ENCODE measurements at regions of chr13 and their contacts with region 1.

Region 1: DNA sequence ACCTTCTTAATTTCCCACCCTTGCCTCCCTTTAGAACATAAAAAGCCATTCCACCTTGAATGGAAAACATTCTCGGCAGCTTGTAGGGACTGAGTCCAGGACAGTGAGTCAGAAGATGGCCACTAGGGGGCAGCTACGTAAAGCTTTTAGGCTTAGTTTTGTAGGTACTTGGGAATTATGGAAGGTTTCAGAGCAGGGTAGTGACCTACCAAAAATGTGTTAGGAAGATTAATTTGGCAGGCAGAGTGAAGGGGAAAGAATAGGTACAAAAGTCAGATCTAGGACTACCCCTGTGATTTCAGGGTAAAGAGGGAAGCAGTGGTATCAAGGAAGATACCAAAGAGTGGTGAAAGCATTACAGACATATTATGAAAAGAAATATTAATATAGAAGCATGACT is 198.4 kb downstream of the NDFIP2 start:
- DNase-seq: no peak
- H3K4me3 Mint-ChIP-seq: no peak overlapping the region
- H3K27ac Mint-ChIP-seq: no peak overlapping the region
- H3K4me1 Mint-ChIP-seq: no peaks in the 10 kb centered on the region
- H3K27me3 Mint-ChIP-seq: peaks cover 4% of the 10 kb centered on the region

Region 2: DNA sequence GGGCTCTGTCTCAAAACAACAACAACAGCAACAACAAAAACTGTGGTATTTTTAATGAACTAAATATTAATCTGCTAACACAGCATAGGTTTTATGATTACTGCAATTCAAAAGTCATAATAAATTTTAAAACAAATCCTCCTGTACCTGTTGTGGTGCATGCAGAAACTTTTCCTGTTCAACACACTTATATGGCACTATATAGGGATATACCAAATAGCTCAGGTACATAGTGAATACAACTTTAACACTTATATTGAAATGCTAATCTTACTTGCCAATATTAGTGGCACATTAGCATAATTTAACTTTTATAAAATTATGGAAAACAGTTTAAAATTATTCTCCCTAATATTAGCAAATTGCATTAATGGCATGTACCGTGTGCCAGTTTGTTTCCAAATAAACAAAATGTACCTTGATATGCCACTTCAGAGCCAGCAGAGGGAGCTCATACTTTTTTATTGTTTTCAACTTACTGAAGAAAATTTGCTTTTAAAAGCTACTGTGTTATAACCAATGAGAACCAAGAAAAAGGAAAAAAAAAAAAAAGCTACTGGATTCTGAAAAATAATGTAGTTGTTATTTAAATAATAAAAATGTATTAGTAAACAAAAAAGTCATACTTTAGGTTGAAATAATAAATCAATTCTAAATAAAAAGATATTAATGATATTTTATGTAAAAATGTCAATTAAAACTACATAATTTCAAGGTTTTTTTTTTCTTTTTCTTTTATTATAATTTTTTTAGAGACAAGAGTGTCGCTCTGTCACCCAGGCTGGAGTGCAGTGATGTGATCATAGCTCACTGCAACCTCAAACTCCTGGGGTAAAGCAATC is 255.3 kb before region 1 on chr13:
- intact Hi-C with region 1: loop called (anchors 5 kb)
- DNase-seq: no peak
- H3K4me3 Mint-ChIP-seq: no peak overlapping the region
- H3K27ac Mint-ChIP-seq: no peak overlapping the region
- H3K4me1 Mint-ChIP-seq: peaks cover 35% of the 10 kb centered on the region
- H3K27me3 Mint-ChIP-seq: no peaks in the 10 kb centered on the region

Region 3: GRCh38 chr13:79692846-79693245 is 13.5 kb after region 1 on chr13:
- intact Hi-C with region 1: no loop called
- DNase-seq: no peak
- H3K4me3 Mint-ChIP-seq: no peak overlapping the region
- H3K27ac Mint-ChIP-seq: no peak overlapping the region
- H3K4me1 Mint-ChIP-seq: no peaks in the 10 kb centered on the region
- H3K27me3 Mint-ChIP-seq: peaks cover 3% of the 10 kb centered on the region

Region 4: DNA sequence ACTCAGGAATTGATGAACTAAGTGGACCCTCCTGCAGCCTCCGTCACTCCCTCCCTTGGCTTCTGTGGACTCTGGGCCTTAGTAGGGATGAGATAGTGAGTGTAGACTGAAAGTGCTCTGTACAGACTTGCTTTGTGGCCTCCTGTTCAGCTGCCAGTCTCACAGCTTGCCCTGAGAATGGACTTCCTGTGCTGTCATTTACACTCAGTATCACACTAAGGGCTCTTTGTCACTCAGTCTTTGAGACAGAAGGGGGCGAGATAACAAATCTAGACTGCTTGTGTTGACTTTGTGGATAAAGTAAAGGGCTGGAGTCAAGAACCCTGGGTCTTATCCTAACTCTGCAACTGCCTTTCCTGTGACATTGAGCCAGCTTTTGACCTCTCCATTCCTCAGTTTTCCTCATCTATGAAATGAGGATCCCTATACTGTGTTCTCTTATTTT is 682.6 kb after region 1 on chr13:
- intact Hi-C with region 1: loop called (anchors 1 kb)
- DNase-seq: no peak
- H3K4me3 Mint-ChIP-seq: no peak overlapping the region
- H3K27ac Mint-ChIP-seq: no peak overlapping the region
- H3K4me1 Mint-ChIP-seq: no peaks in the 10 kb centered on the region
- H3K27me3 Mint-ChIP-seq: peaks cover 4% of the 10 kb centered on the region